CD8-positive, alpha-beta T cell (primary cell): ENCODE measurements at regions of chr19 and their contacts with region 1.

Region 1: DNA sequence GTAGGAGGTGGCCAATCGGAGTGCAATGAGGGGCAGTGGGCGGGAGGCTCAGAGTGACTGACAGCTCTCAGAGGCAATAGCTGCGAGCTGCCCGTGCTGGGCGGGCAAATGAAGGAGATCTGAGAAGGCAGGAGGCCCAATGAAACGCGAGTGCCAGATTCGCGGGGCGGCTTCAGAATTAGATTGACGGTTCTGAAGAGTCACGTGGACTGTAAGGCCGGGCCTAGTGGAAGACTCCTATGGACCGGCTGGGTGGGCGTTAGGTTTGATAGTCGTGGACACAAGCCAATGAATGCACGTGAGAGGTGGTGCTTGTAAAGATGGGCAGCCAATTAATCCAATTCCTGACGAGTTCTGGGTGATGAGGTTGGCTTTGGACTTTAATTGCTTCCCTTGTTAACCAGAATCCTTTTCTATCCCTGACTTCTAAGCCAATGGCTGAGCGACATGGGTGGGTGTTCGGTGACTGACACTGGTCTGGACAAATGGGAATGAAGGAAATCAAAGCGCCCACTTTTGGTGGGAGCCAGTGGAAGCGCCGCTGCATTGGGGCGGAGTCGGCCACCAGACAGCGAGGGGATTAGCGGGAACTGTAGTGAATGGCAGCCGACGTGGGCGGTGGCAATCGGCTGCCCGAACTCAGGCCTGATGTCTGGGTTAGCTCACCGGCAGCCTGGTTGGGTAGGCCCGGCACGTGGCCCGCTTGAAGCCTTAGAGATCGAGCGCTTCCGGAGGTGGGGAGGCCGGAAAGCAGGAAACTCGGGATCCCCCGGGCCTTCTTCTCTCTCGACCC is 524 bp upstream of the KHSRP start:
- DNase-seq: peak; percentile 97 to 100 (median 98)
- ATAC-seq: peak; percentile 82
- H3K4me3 ChIP-seq: peak overlapping the region; percentile 7 to 48
- H3K4me3 Mint-ChIP-seq: peak overlapping the region; percentile 78
- H3K27ac ChIP-seq: peak overlapping the region; percentile 39 to 92
- H3K27ac Mint-ChIP-seq: peak overlapping the region; percentile 93
- H3K4me1 ChIP-seq: peaks cover 35% of the 10 kb centered on the region
- H3K4me1 Mint-ChIP-seq: peaks cover 37% of the 10 kb centered on the region
- H3K27me3 ChIP-seq: no peaks in the 10 kb centered on the region
- H3K27me3 Mint-ChIP-seq: no peaks in the 10 kb centered on the region
- CTCF ChIP-seq: no peak

Region 2: GRCh38 chr19:6199240-6199983 is 225.7 kb before region 1 on chr19:
- CTCF ChIA-PET with region 1: no interaction called
- POLR2A ChIA-PET with region 1: no interaction called
- intact Hi-C with region 1: loop called (anchors 1 kb)
- DNase-seq: peak; percentile 98 to 100 (median 100)
- ATAC-seq: peak; percentile 90
- H3K4me3 ChIP-seq: peak overlapping the region; percentile 80 to 99
- H3K4me3 Mint-ChIP-seq: peak overlapping the region; percentile 94
- H3K27ac ChIP-seq: peak overlapping the region; percentile 65 to 73
- H3K27ac Mint-ChIP-seq: peak overlapping the region; percentile 87
- H3K4me1 ChIP-seq: peaks cover 11% of the 10 kb centered on the region
- H3K4me1 Mint-ChIP-seq: peaks cover 10% of the 10 kb centered on the region
- H3K27me3 ChIP-seq: no peaks in the 10 kb centered on the region
- H3K27me3 Mint-ChIP-seq: peaks cover 3% of the 10 kb centered on the region
- CTCF ChIP-seq: peak; percentile 51

Region 3: GRCh38 chr19:6362027-6362350 is 63.1 kb before region 1 on chr19:
- CTCF ChIA-PET with region 1: no interaction called
- POLR2A ChIA-PET with region 1: interaction called, 5 read pairs
- intact Hi-C with region 1: loop called (anchors 1 kb)
- DNase-seq: no peak
- ATAC-seq: peak; percentile 1
- H3K4me3 ChIP-seq: peak overlapping the region; percentile 78 to 79
- H3K4me3 Mint-ChIP-seq: peak overlapping the region; percentile 93
- H3K27ac ChIP-seq: peak overlapping the region; percentile 72 to 85
- H3K27ac Mint-ChIP-seq: peak overlapping the region; percentile 94
- H3K4me1 ChIP-seq: peaks cover 21% of the 10 kb centered on the region
- H3K4me1 Mint-ChIP-seq: peaks cover 25% of the 10 kb centered on the region
- H3K27me3 ChIP-seq: no peaks in the 10 kb centered on the region
- H3K27me3 Mint-ChIP-seq: no peaks in the 10 kb centered on the region
- CTCF ChIP-seq: no peak

Region 4: GRCh38 chr19:6393074-6393983 is 31.8 kb before region 1 on chr19 and contains the start of gene GTF2F1:
- CTCF ChIA-PET with region 1: no interaction called
- POLR2A ChIA-PET with region 1: interaction called, 6 read pairs
- intact Hi-C with region 1: loop called (anchors 1 kb)
- DNase-seq: peak; percentile 89 to 98 (median 95)
- ATAC-seq: peak; percentile 84
- H3K4me3 ChIP-seq: peak within 1 kb of the TSS; percentile 89 to 97
- H3K4me3 Mint-ChIP-seq: peak within 1 kb of the TSS; percentile 88
- H3K27ac ChIP-seq: peak within 1 kb of the TSS; percentile 98 to 100
- H3K27ac Mint-ChIP-seq: peak within 1 kb of the TSS; percentile 98
- H3K4me1 ChIP-seq: peaks cover 16% of the 10 kb centered on the region
- H3K4me1 Mint-ChIP-seq: peaks cover 25% of the 10 kb centered on the region
- H3K27me3 ChIP-seq: no peaks in the 10 kb centered on the region
- H3K27me3 Mint-ChIP-seq: no peaks in the 10 kb centered on the region
- CTCF ChIP-seq: no peak
- total RNA-seq, gene GTF2F1: 65.2 to 67.9 TPM

Region 5: DNA sequence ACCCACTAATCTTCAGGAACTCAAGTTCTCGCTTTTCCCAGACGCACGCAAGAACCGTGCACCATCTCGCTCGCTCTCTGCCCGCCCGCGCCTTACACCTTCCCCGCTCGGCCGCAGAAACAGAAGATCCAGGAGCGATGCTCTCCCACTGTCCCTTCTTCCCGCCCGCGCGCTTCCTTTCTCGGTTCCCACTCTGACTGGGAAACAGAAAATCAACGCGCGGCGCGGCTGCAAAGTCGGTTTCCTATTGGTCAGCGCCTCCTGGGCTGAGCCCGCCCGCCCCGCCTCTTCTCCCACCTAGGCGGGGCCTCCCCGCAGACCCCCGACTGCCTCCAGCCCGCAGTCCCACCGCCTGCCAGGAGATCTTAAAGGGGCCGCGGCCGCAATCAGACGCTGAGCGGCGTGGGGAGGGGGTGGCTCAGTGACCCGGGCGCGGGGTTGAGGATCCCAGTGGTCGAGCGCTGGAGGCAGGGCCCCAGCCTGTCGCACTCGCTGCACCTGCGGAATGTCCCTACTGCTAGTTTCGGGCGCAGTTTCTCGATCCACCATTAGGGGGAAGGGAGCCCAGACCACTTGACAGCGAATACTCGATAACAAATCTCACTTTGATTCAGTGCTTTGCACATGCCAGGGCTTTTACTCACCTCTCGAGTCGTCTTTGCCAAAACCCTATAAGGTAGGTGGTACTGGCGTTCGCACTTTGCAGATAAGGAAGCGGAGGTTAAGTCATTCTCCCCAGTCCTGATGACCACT is 35.1 kb after region 1 on chr19:
- CTCF ChIA-PET with region 1: interaction called, 3 read pairs
- POLR2A ChIA-PET with region 1: interaction called, 3 read pairs
- intact Hi-C with region 1: loop called (anchors 1 kb)
- DNase-seq: peak; percentile 93 to 98 (median 96)
- ATAC-seq: peak; percentile 85
- H3K4me3 ChIP-seq: peak overlapping the region; percentile 73 to 87
- H3K4me3 Mint-ChIP-seq: peak overlapping the region; percentile 94
- H3K27ac ChIP-seq: peak overlapping the region; percentile 62 to 69
- H3K27ac Mint-ChIP-seq: peak overlapping the region; percentile 81
- H3K4me1 ChIP-seq: peaks cover 20% of the 10 kb centered on the region
- H3K4me1 Mint-ChIP-seq: peaks cover 32% of the 10 kb centered on the region
- H3K27me3 ChIP-seq: peaks cover 0 to 3% of the 10 kb centered on the region in 2 experiments
- H3K27me3 Mint-ChIP-seq: no peaks in the 10 kb centered on the region
- CTCF ChIP-seq: peak; percentile 54

Region 6: GRCh38 chr19:6481541-6482342 is 56.6 kb after region 1 on chr19 and contains the start of gene DENND1C:
- CTCF ChIA-PET with region 1: no interaction called
- POLR2A ChIA-PET with region 1: interaction called, 18 read pairs
- intact Hi-C with region 1: no loop called
- DNase-seq: peak in 8 of 9 experiments; percentile 61 to 84 (median 72)
- ATAC-seq: peak; percentile 88
- H3K4me3 ChIP-seq: peak within 1 kb of the TSS; percentile 89 to 95
- H3K4me3 Mint-ChIP-seq: peak within 1 kb of the TSS; percentile 98
- H3K27ac ChIP-seq: peak within 1 kb of the TSS; percentile 92 to 93
- H3K27ac Mint-ChIP-seq: peak within 1 kb of the TSS; percentile 96
- H3K4me1 ChIP-seq: peaks cover 33% of the 10 kb centered on the region
- H3K4me1 Mint-ChIP-seq: peaks cover 38% of the 10 kb centered on the region
- H3K27me3 ChIP-seq: no peaks in the 10 kb centered on the region
- H3K27me3 Mint-ChIP-seq: no peaks in the 10 kb centered on the region
- CTCF ChIP-seq: no peak
- total RNA-seq, gene DENND1C: 94.0 to 95.9 TPM

Region 7: GRCh38 chr19:6501740-6502648 is 76.9 kb after region 1 on chr19 and contains the start of gene TUBB4A:
- CTCF ChIA-PET with region 1: interaction called, 3 read pairs
- POLR2A ChIA-PET with region 1: no interaction called
- intact Hi-C with region 1: loop called (anchors 2 to 10 kb)
- DNase-seq: peak in 8 of 9 experiments; percentile 18 to 73 (median 46)
- ATAC-seq: peak; percentile 52
- H3K4me3 ChIP-seq: peak within 1 kb of the TSS; percentile 48 to 56
- H3K4me3 Mint-ChIP-seq: peak within 1 kb of the TSS; percentile 85
- H3K27ac ChIP-seq: no peak within 1 kb of the TSS
- H3K27ac Mint-ChIP-seq: no peak within 1 kb of the TSS
- H3K4me1 ChIP-seq: peaks cover 4% of the 10 kb centered on the region
- H3K4me1 Mint-ChIP-seq: peaks cover 27% of the 10 kb centered on the region
- H3K27me3 ChIP-seq: peaks cover 0 to 3% of the 10 kb centered on the region in 2 experiments
- H3K27me3 Mint-ChIP-seq: no peaks in the 10 kb centered on the region
- CTCF ChIP-seq: no peak
- total RNA-seq, gene TUBB4A: 1.4 to 1.6 TPM